A673 (cell line): ENCODE measurements at regions of chr22 and their contacts with region 1.

Region 1: DNA sequence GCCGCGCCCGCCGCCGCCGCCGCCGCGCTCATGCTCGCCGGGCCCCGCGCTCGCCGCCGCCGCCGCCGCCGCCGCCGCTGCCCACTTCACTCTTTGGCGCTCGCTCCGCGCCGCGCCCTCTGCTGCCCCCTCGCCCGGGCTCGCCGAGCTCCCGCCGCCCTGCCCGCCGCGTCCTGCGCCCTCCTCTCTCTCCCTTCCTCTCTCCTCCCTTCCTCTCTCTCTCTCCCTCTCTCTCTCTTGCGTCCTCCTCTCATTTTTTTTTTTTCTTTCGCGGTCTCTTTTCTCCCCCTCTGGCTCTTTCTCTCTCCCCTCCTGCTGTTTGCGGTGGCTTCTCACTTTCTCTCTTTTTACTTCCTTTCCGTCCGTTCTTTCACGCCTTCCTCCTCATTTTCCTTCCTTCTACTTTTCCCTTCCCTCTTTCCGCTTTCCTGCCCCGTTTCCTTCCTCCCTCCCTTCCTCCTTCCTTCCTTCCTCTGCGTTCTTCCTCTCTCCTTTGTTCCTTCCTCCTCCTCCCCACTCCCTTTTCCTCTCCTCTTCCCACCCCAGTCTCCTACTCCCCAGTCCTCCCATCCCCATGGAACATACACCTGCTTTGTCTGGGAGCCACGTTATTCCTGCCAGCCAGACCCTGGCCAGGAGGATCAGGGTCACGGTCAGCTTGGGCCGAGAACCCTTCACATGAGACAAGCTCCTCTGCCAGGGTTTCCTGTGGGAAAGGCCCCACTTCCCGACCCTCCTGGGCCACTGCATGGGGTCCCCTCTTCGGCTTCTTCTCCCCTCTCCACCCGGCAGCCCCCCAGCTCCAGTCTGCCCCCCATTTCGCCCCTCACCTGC is 19.3 kb upstream of the SHISAL1 start:
- DNase-seq: no peak
- H3K4me3 ChIP-seq: peak overlapping the region; percentile 39
- H3K27ac ChIP-seq: no peak overlapping the region
- H3K4me1 ChIP-seq: no peaks in the 10 kb centered on the region
- H3K27me3 ChIP-seq: peaks cover 32% of the 10 kb centered on the region
- CTCF ChIP-seq: 0 out of 2 replicates have a peak, but pooled peaks have one; percentile 12

Region 2: DNA sequence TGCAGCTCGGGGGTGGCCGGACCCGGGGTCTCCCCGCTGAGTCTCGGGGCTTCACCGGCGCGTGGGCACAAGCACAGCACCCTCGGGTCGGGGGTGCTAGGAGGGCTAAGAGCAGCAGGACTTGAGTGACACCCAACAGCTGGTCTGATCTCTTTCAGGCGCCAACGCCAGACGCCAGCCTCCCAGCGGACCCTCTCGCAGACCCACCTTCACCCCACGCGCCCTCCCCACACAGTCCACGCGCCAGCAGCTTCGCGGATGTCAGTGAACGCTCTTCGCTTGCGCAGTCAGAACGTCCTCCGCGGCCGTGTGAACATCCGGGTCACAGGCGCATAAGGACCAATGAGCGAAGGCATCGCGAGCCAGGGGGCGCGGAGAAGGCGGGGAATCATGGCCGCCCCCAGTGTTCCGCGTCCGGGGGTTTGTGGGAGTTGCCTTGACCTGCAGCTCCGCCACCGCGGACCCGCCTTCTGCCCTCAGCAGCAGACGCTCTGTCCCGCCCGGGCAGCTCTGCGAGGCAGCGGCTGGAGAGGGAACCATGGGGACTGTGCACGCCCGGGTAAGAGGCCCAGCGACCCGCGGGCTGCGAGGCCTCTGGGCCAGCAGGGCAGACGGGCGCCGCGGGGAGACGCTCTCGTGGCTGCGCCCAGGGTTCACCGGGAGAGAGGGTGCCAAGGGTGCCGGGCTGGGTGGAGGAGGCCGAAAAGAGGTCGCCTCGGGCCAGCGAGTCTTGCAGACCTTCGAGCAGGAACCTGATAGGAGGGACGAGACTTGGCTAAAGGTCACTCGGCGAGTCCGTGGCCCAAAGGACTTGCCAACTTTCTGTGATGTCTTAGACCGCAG is 376.8 kb before region 1 on chr22 and contains the start of gene SAMM50:
- CTCF ChIA-PET with region 1: no interaction called
- POLR2A ChIA-PET with region 1: no interaction called
- intact Hi-C with region 1: no loop called
- DNase-seq: peak; percentile 93
- H3K4me3 ChIP-seq: peak within 1 kb of the TSS; percentile 96
- H3K27ac ChIP-seq: peak within 1 kb of the TSS; percentile 84
- H3K4me1 ChIP-seq: peaks cover 5% of the 10 kb centered on the region
- H3K27me3 ChIP-seq: no peaks in the 10 kb centered on the region
- CTCF ChIP-seq: no peak
- total RNA-seq, gene SAMM50: 63.1 and 67.2 TPM in 2 replicates

Region 3: DNA sequence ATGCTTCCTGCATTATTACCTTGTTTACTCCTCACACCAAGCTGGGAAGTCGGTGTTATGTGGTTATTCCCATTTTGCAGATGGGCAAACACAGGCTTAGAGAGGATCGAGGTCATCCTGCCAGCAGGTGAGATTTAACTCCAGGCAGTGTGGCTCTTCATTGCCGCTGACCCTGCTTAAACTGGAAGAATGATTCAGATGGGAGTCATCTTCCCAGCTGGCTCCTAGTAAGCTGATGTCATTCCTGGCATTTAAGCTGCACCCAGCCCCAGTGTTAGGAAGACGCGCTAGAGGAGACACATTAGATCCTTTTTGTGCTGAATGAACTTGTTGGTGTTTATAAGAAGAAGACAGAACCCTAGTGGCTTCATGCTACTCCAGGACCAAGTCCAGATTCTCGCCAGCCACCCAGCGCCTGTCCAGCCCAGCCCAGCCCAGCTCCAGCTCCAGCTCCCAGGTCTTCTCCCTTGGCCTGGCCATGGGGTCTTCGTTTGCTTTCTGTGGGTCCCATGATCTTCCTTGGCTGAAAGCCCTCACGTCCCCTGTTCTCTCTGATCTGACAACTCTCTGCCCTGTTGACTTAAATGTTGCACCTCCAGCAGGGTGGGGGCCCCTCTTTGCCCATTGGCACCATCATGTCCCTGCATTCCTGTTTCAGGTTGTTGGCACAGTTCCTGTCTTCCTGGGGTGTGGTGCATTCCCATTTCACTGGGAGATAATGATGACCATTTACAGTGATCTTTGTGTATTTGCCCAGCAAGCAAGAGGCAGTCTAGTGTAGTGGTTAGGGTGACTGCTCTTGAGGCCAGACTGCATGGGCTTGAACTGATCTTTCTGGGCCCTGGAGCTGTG is 294.4 kb before region 1 on chr22:
- CTCF ChIA-PET with region 1: no interaction called
- POLR2A ChIA-PET with region 1: interaction called, 14 read pairs
- intact Hi-C with region 1: no loop called
- DNase-seq: peak; percentile 70
- H3K4me3 ChIP-seq: no peak overlapping the region
- H3K27ac ChIP-seq: no peak overlapping the region
- H3K4me1 ChIP-seq: no peaks in the 10 kb centered on the region
- H3K27me3 ChIP-seq: no peaks in the 10 kb centered on the region
- CTCF ChIP-seq: no peak

Region 4: GRCh38 chr22:44281768-44282637 is 50.1 kb before region 1 on chr22:
- CTCF ChIA-PET with region 1: no interaction called
- POLR2A ChIA-PET with region 1: no interaction called
- intact Hi-C with region 1: loop called (anchors 5 kb)
- DNase-seq: peak; percentile 22
- H3K4me3 ChIP-seq: no peak overlapping the region
- H3K27ac ChIP-seq: no peak overlapping the region
- H3K4me1 ChIP-seq: peaks cover 54% of the 10 kb centered on the region
- H3K27me3 ChIP-seq: no peaks in the 10 kb centered on the region
- CTCF ChIP-seq: no peak